HepG2 (cell line): ENCODE measurements at regions of chr15 and their contacts with region 1.

Region 1: GRCh38 chr15:53586799-53587198 is 172.7 kb downstream of the WDR72 start:
- DNase-seq: peak; percentile 37
- ATAC-seq: no peak
- H3K4me3 ChIP-seq: no peak overlapping the region
- H3K27ac ChIP-seq: no peak overlapping the region
- H3K4me1 ChIP-seq: peaks cover 14% of the 10 kb centered on the region
- H3K27me3 ChIP-seq: no peaks in the 10 kb centered on the region; a peak in 1 of 5 replicates
- CTCF ChIP-seq: peak; percentile 62
- EP300 ChIP-seq: no peak; a peak in 1 of 4 replicates
- POLR2A ChIP-seq: no peak
- RAD21 ChIP-seq: no peak

Region 2: GRCh38 chr15:53197426-53197839 is 389.4 kb before region 1 on chr15:
- CTCF ChIA-PET with region 1: no interaction called
- POLR2A ChIA-PET with region 1: no interaction called
- in situ Hi-C with region 1: no loop called
- intact Hi-C with region 1: loop called (anchors 10 kb)
- DNase-seq: peak; percentile 44
- ATAC-seq: peak; percentile 95
- H3K4me3 ChIP-seq: peak overlapping the region in 1 of 3 experiments; percentile 26; a peak in 1 of 6 replicates
- H3K27ac ChIP-seq: no peak overlapping the region
- H3K4me1 ChIP-seq: peaks cover 7% of the 10 kb centered on the region
- H3K27me3 ChIP-seq: no peaks in the 10 kb centered on the region
- CTCF ChIP-seq: peak; percentile 90
- EP300 ChIP-seq: peak in 1 of 2 experiments; percentile 16; a peak in 1 of 4 replicates
- POLR2A ChIP-seq: no peak
- RAD21 ChIP-seq: peak; percentile 90

Region 3: DNA sequence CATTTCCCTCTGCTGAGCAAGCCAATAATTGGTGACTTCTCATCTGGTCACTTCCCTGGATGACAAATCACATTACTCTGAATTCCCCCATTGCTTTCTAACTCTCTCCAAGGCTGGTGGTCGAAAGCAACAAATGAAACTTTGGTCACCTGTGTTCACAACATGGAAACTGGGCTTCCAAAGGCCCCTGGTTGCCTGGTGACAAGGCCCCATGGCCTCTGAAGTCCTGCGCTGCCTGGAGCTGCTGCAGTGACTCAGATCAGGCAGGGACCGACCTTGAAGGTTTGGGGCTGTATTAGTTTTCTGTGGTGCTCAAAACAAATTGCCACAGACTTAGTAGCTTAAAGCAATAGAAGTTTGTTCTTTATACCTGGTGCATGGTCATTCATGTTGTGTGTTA is 172.6 kb before region 1 on chr15:
- CTCF ChIA-PET with region 1: no interaction called
- POLR2A ChIA-PET with region 1: no interaction called
- in situ Hi-C with region 1: no loop called
- intact Hi-C with region 1: no loop called
- DNase-seq: peak; percentile 75
- ATAC-seq: peak; percentile 98
- H3K4me3 ChIP-seq: no peak overlapping the region
- H3K27ac ChIP-seq: peak overlapping the region; percentile 50
- H3K4me1 ChIP-seq: peaks cover 44% of the 10 kb centered on the region
- H3K27me3 ChIP-seq: no peaks in the 10 kb centered on the region
- CTCF ChIP-seq: no peak
- EP300 ChIP-seq: peak; percentile 43 to 54; a peak in 2 of 4 replicates
- POLR2A ChIP-seq: no peak
- RAD21 ChIP-seq: no peak

Region 4: DNA sequence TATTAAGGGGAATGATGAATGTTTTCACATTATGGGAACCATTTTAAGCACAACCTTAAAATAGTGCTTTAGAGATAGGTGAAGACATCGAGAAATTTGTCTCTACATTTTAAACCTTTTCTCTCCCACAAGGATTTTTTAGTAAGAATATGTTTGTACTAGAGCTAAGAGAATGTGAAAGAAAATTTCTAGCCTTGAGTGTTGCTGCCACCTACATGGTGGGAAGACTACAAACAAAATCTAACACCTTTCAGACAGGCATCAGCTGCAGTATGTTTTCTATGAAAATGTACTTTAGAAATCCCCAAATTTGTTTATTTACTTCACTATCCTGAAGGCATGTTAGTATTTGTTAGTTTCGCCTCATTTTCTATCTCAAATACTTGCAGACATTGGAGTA is 74.8 kb before region 1 on chr15:
- CTCF ChIA-PET with region 1: no interaction called
- POLR2A ChIA-PET with region 1: no interaction called
- in situ Hi-C with region 1: no loop called
- intact Hi-C with region 1: no loop called
- DNase-seq: peak; percentile 22
- ATAC-seq: 0 out of 3 replicates have a peak, but pooled peaks have one; percentile 42
- H3K4me3 ChIP-seq: no peak overlapping the region
- H3K27ac ChIP-seq: no peak overlapping the region
- H3K4me1 ChIP-seq: peaks cover 27% of the 10 kb centered on the region
- H3K27me3 ChIP-seq: no peaks in the 10 kb centered on the region
- CTCF ChIP-seq: peak; percentile 43
- EP300 ChIP-seq: no peak
- POLR2A ChIP-seq: no peak
- RAD21 ChIP-seq: 0 out of 2 replicates have a peak, but pooled peaks have one; percentile 43